CD4-positive, alpha-beta T cell (primary cell): ENCODE measurements at regions of chr19 and their contacts with region 1.

Region 1: GRCh38 chr19:52853880-52854279 is 3.5 kb downstream of the ZNF468 start:
- DNase-seq: no peak
- ATAC-seq: no peak
- H3K4me3 ChIP-seq: no peak overlapping the region
- H3K4me3 Mint-ChIP-seq: no peak overlapping the region
- H3K27ac ChIP-seq: no peak overlapping the region
- H3K27ac Mint-ChIP-seq: no peak overlapping the region
- H3K4me1 ChIP-seq: peaks cover 11% of the 10 kb centered on the region
- H3K4me1 Mint-ChIP-seq: peaks cover 33% of the 10 kb centered on the region
- H3K27me3 ChIP-seq: no peaks in the 10 kb centered on the region
- H3K27me3 Mint-ChIP-seq: no peaks in the 10 kb centered on the region
- CTCF ChIP-seq: no peak

Region 2: DNA sequence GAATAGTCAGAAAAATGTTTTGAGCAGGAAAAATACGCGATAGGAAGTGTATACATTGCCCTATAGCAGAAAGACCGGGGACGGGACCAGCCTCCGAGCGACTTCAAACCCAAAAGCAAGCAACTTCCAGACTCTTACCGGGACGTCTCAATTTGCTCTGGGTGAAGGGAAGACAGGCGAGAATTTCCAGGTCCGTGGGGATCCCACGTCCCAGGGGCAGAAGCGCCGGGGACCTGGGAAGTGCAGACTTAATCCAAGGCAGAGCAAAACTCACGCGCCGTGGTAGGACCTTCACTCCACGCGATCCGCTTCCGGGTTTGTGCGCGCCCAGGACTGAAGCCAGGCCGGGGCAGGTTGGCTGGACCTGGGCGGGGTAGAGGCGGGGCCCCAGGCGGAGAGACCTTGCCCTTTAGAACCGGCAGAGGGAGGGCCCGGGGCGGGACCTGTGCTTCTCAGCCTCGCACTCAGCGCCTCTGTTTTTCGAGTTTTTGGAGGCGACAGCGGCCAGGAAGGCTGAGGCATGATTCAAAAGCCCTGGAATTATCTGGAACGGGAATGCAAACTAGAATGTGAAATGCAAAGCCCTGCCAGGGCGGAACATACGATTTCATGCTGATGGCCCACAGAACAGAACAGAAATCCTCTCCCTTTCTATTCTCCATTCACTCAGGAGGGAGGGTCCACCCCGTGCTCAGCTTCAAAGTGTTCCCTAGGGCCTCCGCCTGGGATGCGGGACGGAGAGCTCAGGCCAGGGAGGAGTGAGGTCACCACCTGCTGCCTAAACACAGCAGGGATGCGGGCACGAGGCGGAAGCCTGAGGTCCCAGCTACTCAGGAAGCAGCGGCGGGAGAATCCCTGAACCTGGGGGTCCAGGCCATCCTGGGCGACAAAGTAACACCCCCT is 67.2 kb before region 1 on chr19 and contains the start of gene ZNF600:
- CTCF ChIA-PET with region 1: no interaction called
- POLR2A ChIA-PET with region 1: interaction called, 3 read pairs
- intact Hi-C with region 1: loop called in 1 of 2 experiments (anchors 2 kb)
- DNase-seq: peak; percentile 26 to 87 (median 68)
- ATAC-seq: peak; percentile 92
- H3K4me3 ChIP-seq: peak within 1 kb of the TSS; percentile 79
- H3K4me3 Mint-ChIP-seq: peak within 1 kb of the TSS; percentile 93
- H3K27ac ChIP-seq: peak within 1 kb of the TSS; percentile 46 to 70
- H3K27ac Mint-ChIP-seq: peak within 1 kb of the TSS; percentile 82
- H3K4me1 ChIP-seq: peaks cover 23% of the 10 kb centered on the region
- H3K4me1 Mint-ChIP-seq: peaks cover 34% of the 10 kb centered on the region
- H3K27me3 ChIP-seq: no peaks in the 10 kb centered on the region
- H3K27me3 Mint-ChIP-seq: no peaks in the 10 kb centered on the region
- CTCF ChIP-seq: no peak
- total RNA-seq, gene ZNF600: 11.2 to 13.4 TPM

Region 3: GRCh38 chr19:52823676-52824075 is 30.2 kb before region 1 on chr19:
- CTCF ChIA-PET with region 1: no interaction called
- POLR2A ChIA-PET with region 1: no interaction called
- intact Hi-C with region 1: loop called in 1 of 2 experiments (anchors 1 kb)
- DNase-seq: no peak
- ATAC-seq: no peak
- H3K4me3 ChIP-seq: no peak overlapping the region
- H3K4me3 Mint-ChIP-seq: no peak overlapping the region
- H3K27ac ChIP-seq: no peak overlapping the region
- H3K27ac Mint-ChIP-seq: no peak overlapping the region
- H3K4me1 ChIP-seq: peaks cover 9% of the 10 kb centered on the region
- H3K4me1 Mint-ChIP-seq: peaks cover 13% of the 10 kb centered on the region
- H3K27me3 ChIP-seq: no peaks in the 10 kb centered on the region
- H3K27me3 Mint-ChIP-seq: no peaks in the 10 kb centered on the region
- CTCF ChIP-seq: no peak

Region 4: GRCh38 chr19:53158119-53158656 is 304.3 kb after region 1 on chr19:
- CTCF ChIA-PET with region 1: no interaction called
- POLR2A ChIA-PET with region 1: no interaction called
- intact Hi-C with region 1: no loop called
- DNase-seq: peak in 13 of 14 experiments; percentile 1 to 66 (median 9)
- ATAC-seq: peak; percentile 33
- H3K4me3 ChIP-seq: peak overlapping the region; percentile 71
- H3K4me3 Mint-ChIP-seq: peak overlapping the region; percentile 92
- H3K27ac ChIP-seq: peak overlapping the region; percentile 44 to 56
- H3K27ac Mint-ChIP-seq: peak overlapping the region; percentile 82
- H3K4me1 ChIP-seq: peaks cover 19% of the 10 kb centered on the region
- H3K4me1 Mint-ChIP-seq: peaks cover 26% of the 10 kb centered on the region
- H3K27me3 ChIP-seq: peaks cover 0 to 3% of the 10 kb centered on the region in 2 experiments
- H3K27me3 Mint-ChIP-seq: no peaks in the 10 kb centered on the region
- CTCF ChIP-seq: no peak